Activated T-helper 2 cell treated with anti-CD3 and anti-CD28 coated beads, Interferon-gamma antibody, Interleukin-2, Interleukin-4, amounts not matched to agents 10 μg/mL and 5 μg/mL and 100 μg/mL, durations not matched to agents 14 hours and 24 hours and 36 hours (primary cell): ENCODE measurements at regions of chr6 and their contacts with region 1.

Region 1: GRCh38 chr6:151370509-151371078 is 20.8 kb downstream of the ZBTB2 start:
- DNase-seq: no peak
- H3K4me3 Mint-ChIP-seq: no peak overlapping the region
- H3K27ac Mint-ChIP-seq: no peak overlapping the region
- H3K4me1 Mint-ChIP-seq: peaks cover 39% of the 10 kb centered on the region
- H3K27me3 Mint-ChIP-seq: no peaks in the 10 kb centered on the region

Region 2: DNA sequence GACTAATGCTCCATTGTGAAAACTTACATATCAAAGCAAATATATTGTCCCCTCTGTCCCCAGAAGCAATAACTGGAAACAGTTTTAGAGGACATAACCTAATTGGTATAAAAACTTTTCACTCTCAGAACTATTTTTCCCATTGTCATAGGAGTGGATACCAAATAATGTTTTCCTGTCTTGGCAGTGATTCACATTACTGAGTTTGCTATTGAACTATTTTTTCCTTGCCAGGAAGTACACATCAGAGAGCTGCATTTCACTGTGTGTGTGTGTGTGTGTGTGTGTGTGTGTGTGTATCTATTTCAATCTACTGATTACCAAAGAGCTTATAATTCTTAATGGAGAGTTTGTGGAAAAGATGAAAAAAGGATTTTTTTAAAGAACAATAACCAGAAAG is 85.5 kb before region 1 on chr6:
- intact Hi-C with region 1: loop called (anchors 5 kb)
- DNase-seq: no peak
- H3K4me3 Mint-ChIP-seq: no peak overlapping the region
- H3K27ac Mint-ChIP-seq: peak overlapping the region; percentile 48
- H3K4me1 Mint-ChIP-seq: peaks cover 55% of the 10 kb centered on the region
- H3K27me3 Mint-ChIP-seq: peaks cover 24% of the 10 kb centered on the region

Region 3: DNA sequence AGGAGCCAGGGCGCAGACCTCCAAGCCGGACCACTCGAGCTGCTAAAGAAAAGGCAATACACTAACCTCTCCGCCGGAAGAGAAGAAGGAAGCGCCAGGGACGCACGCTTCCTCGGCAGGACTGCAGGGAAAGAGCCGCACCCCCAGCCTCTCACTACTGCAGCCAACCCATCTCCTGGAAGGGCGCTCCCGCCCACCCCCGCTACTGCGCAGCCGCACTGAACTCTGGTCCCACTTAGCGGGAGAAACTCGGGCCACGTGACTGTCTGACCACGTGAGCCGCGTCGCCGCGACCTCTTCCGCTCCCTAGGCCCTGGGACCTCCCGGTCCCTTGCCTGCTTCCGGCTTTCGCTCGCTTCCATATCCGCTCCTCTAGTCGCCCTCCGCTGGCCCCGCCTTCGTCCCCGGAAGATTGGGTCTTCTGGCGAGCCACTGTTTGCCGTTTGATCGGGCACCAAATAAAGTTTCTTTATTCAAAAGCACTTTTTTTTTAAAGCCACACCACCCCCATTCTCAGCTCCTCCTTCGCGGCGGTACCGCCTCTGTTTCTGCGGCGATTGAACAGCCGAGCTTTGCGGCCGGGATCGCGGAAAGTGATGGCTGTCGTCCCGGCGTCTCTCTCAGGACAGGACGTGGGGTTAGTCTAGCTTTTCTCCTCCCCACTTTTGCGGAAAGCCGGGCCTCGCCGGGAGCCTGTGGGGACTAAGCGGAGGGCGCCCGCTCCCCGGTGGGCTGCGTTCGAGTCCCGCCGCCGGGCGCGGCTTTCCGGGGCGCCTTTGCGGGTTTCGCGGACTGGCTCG is 81.6 kb after region 1 on chr6 and contains the start of gene RMND1:
- intact Hi-C with region 1: loop called (anchors 5 kb)
- DNase-seq: peak; percentile 99
- H3K4me3 Mint-ChIP-seq: peak within 1 kb of the TSS; percentile 97
- H3K27ac Mint-ChIP-seq: peak within 1 kb of the TSS; percentile 82
- H3K4me1 Mint-ChIP-seq: peaks cover 27% of the 10 kb centered on the region
- H3K27me3 Mint-ChIP-seq: no peaks in the 10 kb centered on the region
- total RNA-seq, gene RMND1: 18.5 and 20.5 TPM in 2 replicates

Region 4: GRCh38 chr6:151738960-151739359 is 368.4 kb after region 1 on chr6:
- intact Hi-C with region 1: no loop called
- DNase-seq: no peak
- H3K4me3 Mint-ChIP-seq: no peak overlapping the region
- H3K27ac Mint-ChIP-seq: no peak overlapping the region
- H3K4me1 Mint-ChIP-seq: no peaks in the 10 kb centered on the region
- H3K27me3 Mint-ChIP-seq: peaks cover 19% of the 10 kb centered on the region